Endothelial cell of umbilical vein (primary cell): ENCODE measurements at regions of chr1 and their contacts with region 1.

Region 1: GRCh38 chr1:155437405-155437804 is 116.7 kb downstream of the RUSC1 start:
- DNase-seq: no peak
- H3K4me3 ChIP-seq: no peak overlapping the region
- H3K27ac ChIP-seq: no peak overlapping the region
- H3K4me1 ChIP-seq: no peaks in the 10 kb centered on the region
- H3K27me3 ChIP-seq: no peaks in the 10 kb centered on the region
- CTCF ChIP-seq: no peak
- POLR2A ChIP-seq: no peak

Region 2: DNA sequence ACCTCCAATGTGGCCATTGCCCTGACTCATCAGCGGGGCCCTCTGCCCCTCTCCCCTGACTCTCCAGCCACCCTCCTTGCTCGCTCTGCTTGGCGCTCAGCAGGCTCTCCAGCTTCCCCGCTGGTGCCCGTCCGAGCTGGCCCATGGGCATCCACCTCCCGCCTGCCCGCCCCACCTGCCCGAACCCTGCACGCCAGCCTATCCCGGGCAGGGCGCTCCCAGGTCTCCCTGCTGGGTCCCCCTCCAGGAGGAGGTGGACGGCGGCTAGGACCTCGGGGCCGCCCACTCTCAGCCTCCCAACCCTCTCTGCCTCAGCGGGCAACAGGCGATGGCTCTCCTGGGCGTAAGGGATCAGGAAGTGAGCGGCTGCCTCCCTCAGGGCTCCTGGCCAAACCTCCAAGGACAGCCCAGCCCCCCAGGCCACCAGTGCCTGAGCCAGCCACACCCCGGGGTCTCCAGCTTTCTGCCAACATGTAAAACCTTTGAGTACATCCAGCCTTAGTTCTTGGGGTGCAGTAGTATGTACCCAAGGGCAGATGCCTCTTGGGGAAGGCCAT is 149.3 kb before region 1 on chr1:
- CTCF ChIA-PET with region 1: no interaction called
- POLR2A ChIA-PET with region 1: no interaction called
- dilution Hi-C with region 1: no loop called
- intact Hi-C with region 1: no loop called
- DNase-seq: no peak
- H3K4me3 ChIP-seq: no peak overlapping the region
- H3K27ac ChIP-seq: no peak overlapping the region
- H3K4me1 ChIP-seq: no peaks in the 10 kb centered on the region
- H3K27me3 ChIP-seq: peaks cover 2 to 5% of the 10 kb centered on the region in 2 experiments
- CTCF ChIP-seq: no peak
- POLR2A ChIP-seq: no peak

Region 3: GRCh38 chr1:155504207-155504606 is 66.8 kb after region 1 on chr1:
- CTCF ChIA-PET with region 1: interaction called, 10 read pairs
- POLR2A ChIA-PET with region 1: no interaction called
- dilution Hi-C with region 1: no loop called
- intact Hi-C with region 1: no loop called
- DNase-seq: peak; percentile 45
- H3K4me3 ChIP-seq: no peak overlapping the region
- H3K27ac ChIP-seq: no peak overlapping the region
- H3K4me1 ChIP-seq: no peaks in the 10 kb centered on the region
- H3K27me3 ChIP-seq: no peaks in the 10 kb centered on the region
- CTCF ChIP-seq: peak; percentile 7 to 13
- POLR2A ChIP-seq: no peak